Pancreas (tissue), 10 donors: ENCODE measurements at regions of chr6 and their contacts with region 1.

Region 1: DNA sequence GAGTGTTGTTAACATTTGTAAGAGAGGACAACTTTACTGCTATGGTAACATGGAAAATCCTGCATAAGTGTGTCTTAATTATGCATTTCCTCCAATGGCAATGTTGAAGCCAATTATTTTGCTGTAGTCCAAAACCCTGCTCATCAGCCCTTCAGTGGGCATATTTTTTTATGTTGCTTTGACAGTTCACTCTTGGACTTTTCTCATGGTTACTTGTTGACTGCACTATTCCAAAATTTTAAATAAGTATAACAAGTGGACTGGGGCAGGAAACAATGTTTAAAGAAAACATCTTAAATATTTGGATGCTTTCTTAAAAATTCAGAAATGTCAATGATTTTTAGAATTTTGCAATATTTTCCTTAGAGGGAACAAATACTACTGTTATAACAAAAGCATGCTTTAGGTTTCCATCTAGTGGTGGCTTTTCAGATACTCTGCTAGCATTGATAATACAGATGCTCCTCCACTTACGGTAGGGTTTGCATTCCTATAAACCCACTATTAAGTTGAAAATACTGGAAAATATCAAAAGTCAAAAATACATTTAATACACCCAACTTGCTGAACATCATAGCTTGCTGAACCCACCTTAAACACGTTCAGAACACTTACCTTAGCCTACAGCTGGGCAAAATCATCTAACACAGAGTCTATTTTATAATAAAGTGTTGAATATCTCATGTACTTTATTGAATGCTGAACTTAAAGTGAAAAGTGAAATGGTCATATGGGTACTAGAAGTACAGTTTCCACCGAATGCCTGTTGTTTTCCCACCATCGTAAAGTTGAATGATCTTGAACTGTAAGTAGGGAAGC is 86.4 kb downstream of the ADGRG6 start:
- DNase-seq: no peak
- ATAC-seq: peak in 2 of 4 donors; percentile 71 to 72
- H3K4me3 ChIP-seq: no peak overlapping the region
- H3K27ac ChIP-seq: no peak overlapping the region
- H3K4me1 ChIP-seq: peaks cover 0 to 3% (median 0%) of the 10 kb centered on the region in 3 donors
- H3K27me3 ChIP-seq: no peaks in the 10 kb centered on the region
- CTCF ChIP-seq: peak in 3 of 4 donors; percentile 12 to 40 (median 32)

Region 2: GRCh38 chr6:142155895-142156757 is 232.1 kb before region 1 on chr6:
- intact Hi-C with region 1: loop called in 1 of 3 experiments (anchors 10 kb)
- DNase-seq: no peak
- ATAC-seq: peak; percentile 43 to 79 (median 76)
- H3K4me3 ChIP-seq: no peak overlapping the region
- H3K27ac ChIP-seq: no peak overlapping the region
- H3K4me1 ChIP-seq: peaks cover 0 to 4% (median 0%) of the 10 kb centered on the region in 3 donors
- H3K27me3 ChIP-seq: no peaks in the 10 kb centered on the region
- CTCF ChIP-seq: peak in 3 of 4 donors; percentile 21 to 31 (median 22)